Left colon (tissue), 2 donors: ENCODE measurements at regions of chr13 and their contacts with region 1.

Region 1: DNA sequence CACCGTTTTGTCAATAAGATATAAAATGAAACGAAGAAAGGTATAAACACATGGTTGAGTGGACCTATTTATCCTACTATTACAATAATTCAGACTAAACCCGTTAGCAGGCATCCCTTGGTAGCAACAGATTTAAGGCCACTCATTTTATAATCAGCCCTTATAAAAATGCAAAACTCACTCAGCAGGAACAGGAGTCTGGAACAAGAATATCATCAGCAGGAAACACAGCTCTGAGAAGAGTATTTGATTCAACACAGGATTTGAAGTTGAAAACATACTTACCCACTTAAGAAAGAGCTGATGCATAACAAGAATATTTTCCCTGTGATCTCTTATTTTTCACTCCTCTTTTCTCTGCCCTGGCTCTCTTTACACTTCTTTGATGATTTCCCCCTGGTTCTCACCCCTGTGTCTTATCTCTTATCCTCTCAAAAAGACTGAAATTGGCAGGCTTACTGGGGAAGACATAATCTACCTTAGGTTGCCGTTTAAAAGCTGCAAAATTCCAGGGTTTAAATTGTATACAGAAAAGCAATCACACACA is 1722.7 kb downstream of the SLITRK5 start:
- DNase-seq: no peak
- ATAC-seq: no peak

Region 2: DNA sequence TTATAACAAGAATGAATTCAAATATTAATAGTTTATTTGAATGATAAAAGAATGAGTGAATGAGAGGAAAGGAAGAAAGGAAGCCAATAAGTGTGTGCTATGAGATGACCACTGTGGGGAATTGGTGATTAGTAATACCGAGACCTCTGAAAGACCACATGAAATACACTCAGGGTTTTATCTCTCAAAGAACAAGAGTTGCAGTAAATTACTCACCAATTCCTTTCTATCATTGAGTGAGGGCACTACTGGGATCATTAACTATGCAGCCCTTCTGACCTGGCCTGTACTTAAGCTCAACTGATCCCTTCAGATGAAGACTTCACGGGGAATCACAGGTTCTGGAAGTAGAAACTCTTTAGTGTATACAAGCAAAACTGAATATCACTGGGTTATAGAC is 86.6 kb before region 1 on chr13:
- intact Hi-C with region 1: no loop called
- DNase-seq: no peak
- ATAC-seq: no peak

Region 3: GRCh38 chr13:89343165-89343564 is 50.7 kb before region 1 on chr13:
- intact Hi-C with region 1: loop called in 1 of 2 experiments (anchors 5 kb)
- DNase-seq: no peak
- ATAC-seq: no peak

Region 4: DNA sequence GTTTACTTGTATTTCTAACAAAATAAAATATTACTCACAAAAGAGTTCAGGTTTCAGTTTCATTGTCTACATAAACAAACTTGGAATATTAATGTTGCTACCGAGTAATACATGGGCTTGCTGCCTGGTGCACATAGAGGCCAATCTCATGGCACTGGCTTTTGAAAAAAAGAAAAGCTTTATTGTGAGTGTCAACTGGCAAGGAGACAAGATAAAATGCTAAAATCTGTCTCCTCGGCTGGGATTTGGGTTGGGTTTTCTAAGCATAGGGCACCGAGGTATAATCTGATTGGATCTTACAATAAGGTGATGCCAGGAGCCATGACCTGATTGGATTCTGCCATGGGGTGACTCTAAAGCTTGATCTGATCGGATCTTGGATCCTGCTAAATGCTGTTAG is 433.7 kb after region 1 on chr13:
- intact Hi-C with region 1: no loop called
- DNase-seq: no peak
- ATAC-seq: no peak